Naive thymus-derived CD8-positive, alpha-beta T cell (primary cell): ENCODE measurements at regions of chr15 and their contacts with region 1.

Region 1: DNA sequence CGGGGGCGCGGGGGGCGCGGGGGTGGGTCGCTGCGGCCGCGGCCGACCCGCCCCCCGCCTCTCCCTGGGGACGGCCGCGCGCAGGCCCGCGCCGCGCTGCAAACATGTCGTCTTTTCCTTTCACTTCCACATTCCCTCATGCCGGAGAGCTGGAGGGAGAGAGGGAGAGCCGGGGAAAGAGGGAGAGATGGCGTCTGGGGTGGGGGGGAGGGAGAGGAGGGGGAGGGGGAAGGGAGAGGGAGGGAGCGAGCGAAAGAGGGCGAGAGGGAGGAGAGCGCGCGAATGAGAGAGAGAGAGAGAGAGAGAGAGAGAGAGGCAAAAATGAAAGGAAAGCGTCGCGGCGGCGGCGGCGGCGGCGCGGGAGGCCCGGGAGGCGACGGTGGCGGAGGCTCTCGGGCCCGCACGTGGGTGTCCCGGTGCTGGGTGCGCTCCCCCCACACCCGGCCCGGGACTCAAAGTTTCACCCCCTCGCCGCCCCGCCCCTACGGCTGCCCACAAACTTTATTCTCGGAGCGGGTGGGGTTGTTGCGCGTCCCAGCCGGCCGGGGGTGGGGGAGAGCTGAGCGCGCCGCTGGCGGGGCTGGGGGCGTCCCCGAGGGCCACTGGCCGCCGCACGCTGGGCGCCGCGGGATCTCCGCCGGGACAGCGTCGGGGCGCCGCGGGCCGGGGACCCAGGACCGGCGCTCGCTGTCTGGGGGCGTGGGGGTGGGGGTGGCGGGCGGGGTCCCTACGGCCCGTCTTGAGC is 731 bp downstream of the ZNF710 start:
- DNase-seq: peak; percentile 38 to 78 (median 58)
- ATAC-seq: peak; percentile 63 to 66
- H3K4me3 Mint-ChIP-seq: peak overlapping the region; percentile 72 to 98 (median 88)
- H3K27ac Mint-ChIP-seq: peak overlapping the region in 9 of 10 donors; percentile 41 to 97 (median 75)
- H3K4me1 Mint-ChIP-seq: peaks cover 23 to 57% (median 49%) of the 10 kb centered on the region in 4 donors
- H3K27me3 Mint-ChIP-seq: peaks cover 0 to 2% (median 0%) of the 10 kb centered on the region in 5 donors

Region 2: DNA sequence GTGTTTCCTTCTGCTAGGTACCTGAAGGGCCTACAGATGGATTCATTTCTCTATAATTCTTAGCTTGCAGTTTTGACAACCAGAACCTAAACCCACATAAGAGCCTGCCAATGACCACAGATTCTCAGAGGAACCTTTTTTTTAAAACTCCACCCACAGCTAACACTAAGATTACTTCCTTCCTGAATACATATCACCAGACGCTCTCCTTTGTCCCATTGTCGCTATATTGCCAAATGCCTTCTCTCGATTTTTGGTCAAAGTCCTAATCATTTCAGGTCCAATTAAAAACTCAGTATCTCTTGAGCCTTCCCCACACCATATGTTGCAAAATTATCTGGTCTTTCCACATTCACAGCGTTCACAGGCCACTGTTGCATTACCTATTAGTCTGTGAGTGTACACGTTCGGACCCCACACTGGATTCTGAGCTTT is 11.7 kb after region 1 on chr15:
- POLR2A ChIA-PET with region 1: interaction called, 29 read pairs
- DNase-seq: peak in 5 of 10 donors; percentile 16 to 83 (median 71)
- ATAC-seq: peak; percentile 91 to 96
- H3K4me3 Mint-ChIP-seq: peak overlapping the region; percentile 29 to 80 (median 68)
- H3K27ac Mint-ChIP-seq: peak overlapping the region in 9 of 10 donors; percentile 18 to 82 (median 57)
- H3K4me1 Mint-ChIP-seq: peaks cover 26 to 74% (median 47%) of the 10 kb centered on the region in 4 donors
- H3K27me3 Mint-ChIP-seq: no peaks in the 10 kb centered on the region